Esophagus muscularis mucosa (tissue), 4 donors: ENCODE measurements at regions of chr3 and their contacts with region 1.

Region 1: GRCh38 chr3:57755668-57756527 is at the start of gene SLMAP:
- DNase-seq: peak; percentile 99
- H3K4me3 ChIP-seq: peak within 1 kb of the TSS; percentile 79 to 95 (median 94)
- H3K27ac ChIP-seq: peak within 1 kb of the TSS; percentile 88 to 93 (median 92)
- H3K4me1 ChIP-seq: peaks cover 38 to 46% (median 44%) of the 10 kb centered on the region in 4 donors
- H3K27me3 ChIP-seq: no peaks in the 10 kb centered on the region
- CTCF ChIP-seq: peak in 1 of 3 experiments; percentile 22
- EP300 ChIP-seq: no peak
- POLR2A ChIP-seq: peak; percentile 46
- total RNA-seq, gene SLMAP: 399 to 519 (median 464) TPM

Region 2: DNA sequence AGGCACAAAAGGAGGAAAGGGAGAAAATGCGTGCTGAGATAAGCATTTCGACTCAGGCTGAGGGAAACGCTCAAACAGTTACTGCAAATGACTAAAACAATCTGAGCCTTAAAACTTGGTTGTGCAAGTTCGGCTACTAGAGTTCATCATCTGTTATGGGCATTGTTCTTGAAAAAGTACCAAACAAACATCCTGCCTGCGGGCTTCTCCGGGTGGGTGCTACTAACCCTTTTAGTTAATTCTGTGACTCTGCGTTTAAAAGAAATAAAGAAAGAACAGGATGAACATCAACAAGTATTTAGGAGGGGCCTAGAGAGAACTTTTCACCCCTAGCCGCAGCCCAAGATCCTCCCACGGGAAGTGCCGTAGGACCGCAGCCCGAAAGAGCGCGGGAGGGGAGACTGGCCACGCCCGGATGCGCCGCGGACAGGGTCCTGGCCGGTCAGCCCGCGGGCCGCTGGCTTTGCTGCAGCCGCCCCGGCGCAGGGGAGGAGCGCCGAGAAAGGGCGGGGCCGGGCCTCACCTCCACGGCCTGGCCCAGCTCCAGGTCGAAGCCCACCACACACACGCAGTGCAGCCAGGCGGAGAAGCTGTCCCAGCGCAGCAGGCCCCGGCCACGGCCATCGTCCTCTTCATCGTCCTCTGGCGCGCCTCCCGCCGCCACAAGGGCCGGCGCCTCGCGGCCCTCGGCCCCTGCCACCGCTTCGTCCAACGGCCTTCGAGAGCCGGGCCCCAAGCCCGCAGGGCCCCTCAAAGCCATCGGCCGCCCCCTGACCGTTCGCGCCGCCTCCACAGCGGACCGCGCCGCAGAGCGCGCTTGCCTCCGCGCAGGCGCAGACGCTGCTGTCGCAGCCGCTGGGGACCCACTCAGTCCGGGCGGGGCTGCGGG is 63.4 kb before region 1 on chr3 and contains the start of gene DENND6A:
- intact Hi-C with region 1: loop called (anchors 5 kb)
- DNase-seq: peak; percentile 96
- H3K4me3 ChIP-seq: peak within 1 kb of the TSS; percentile 82 to 93 (median 88)
- H3K27ac ChIP-seq: peak within 1 kb of the TSS; percentile 97 to 99 (median 98)
- H3K4me1 ChIP-seq: peaks cover 29 to 47% (median 42%) of the 10 kb centered on the region in 4 donors
- H3K27me3 ChIP-seq: no peaks in the 10 kb centered on the region
- CTCF ChIP-seq: peak in 1 of 3 experiments; percentile 12
- EP300 ChIP-seq: no peak
- POLR2A ChIP-seq: peak; percentile 97
- total RNA-seq, gene DENND6A: 24.6 to 47.2 (median 43.2) TPM

Region 3: GRCh38 chr3:57791245-57791644 is 35.3 kb after region 1 on chr3:
- intact Hi-C with region 1: no loop called
- DNase-seq: no peak
- H3K4me3 ChIP-seq: no peak overlapping the region
- H3K27ac ChIP-seq: no peak overlapping the region
- H3K4me1 ChIP-seq: peaks cover 21 to 34% (median 28%) of the 10 kb centered on the region in 4 donors
- H3K27me3 ChIP-seq: no peaks in the 10 kb centered on the region
- CTCF ChIP-seq: no peak
- EP300 ChIP-seq: no peak
- POLR2A ChIP-seq: no peak

Region 4: DNA sequence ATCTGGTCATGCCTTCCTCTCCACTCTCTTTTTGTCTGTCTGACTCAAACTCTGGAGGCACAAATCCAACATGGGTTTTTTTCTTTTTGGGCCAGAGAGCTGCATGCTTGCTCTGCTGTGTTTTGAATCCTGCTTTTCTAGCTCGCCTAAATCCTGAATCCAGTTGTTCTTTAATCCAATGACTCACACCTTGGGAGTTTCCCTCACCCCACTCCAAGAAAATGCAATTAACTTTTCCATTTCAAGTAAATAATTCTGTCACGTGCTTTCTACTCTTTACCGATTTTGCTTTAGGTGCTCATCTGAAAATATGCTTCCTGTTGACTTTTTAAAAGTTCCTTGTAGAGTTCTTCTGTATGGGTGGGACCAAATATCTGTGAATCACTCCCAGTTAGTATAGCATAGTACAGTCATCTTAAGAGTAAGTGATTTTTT is 47.8 kb after region 1 on chr3:
- intact Hi-C with region 1: loop called (anchors 5 kb)
- DNase-seq: no peak
- H3K4me3 ChIP-seq: peak overlapping the region in 1 of 4 donors; percentile 15
- H3K27ac ChIP-seq: peak overlapping the region in 3 of 4 donors; percentile 27 to 45 (median 34)
- H3K4me1 ChIP-seq: peaks cover 38 to 49% (median 48%) of the 10 kb centered on the region in 4 donors
- H3K27me3 ChIP-seq: no peaks in the 10 kb centered on the region
- CTCF ChIP-seq: no peak
- EP300 ChIP-seq: no peak
- POLR2A ChIP-seq: no peak

Region 5: GRCh38 chr3:57877116-57877515 is 121.2 kb after region 1 on chr3:
- intact Hi-C with region 1: no loop called
- DNase-seq: no peak
- H3K4me3 ChIP-seq: no peak overlapping the region
- H3K27ac ChIP-seq: peak overlapping the region in 3 of 4 donors; percentile 3 to 66 (median 44)
- H3K4me1 ChIP-seq: peaks cover 0 to 23% (median 13%) of the 10 kb centered on the region in 4 donors
- H3K27me3 ChIP-seq: no peaks in the 10 kb centered on the region
- CTCF ChIP-seq: no peak
- EP300 ChIP-seq: no peak
- POLR2A ChIP-seq: no peak

Region 6: DNA sequence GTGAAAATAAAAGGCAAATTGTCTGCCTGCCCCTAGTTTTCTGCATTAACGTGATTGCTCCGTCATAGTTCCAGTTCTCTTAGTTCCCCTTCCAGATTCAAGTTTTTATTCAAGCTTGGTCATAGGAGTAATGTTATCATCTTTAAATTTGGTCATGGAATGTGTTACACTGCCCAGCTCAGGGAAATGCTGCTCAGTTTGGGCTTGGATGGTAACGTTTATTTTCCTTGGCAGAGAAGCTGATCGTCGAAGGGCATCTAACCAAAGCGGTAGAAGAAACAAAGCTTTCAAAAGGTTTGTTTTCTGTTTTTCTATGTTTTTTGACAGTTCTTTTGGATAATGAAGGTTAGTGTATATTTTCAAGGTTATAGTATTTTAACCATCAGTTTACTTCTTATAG is 133.9 kb after region 1 on chr3:
- intact Hi-C with region 1: no loop called
- DNase-seq: no peak
- H3K4me3 ChIP-seq: peak overlapping the region; percentile 51 to 57 (median 54)
- H3K27ac ChIP-seq: peak overlapping the region; percentile 85 to 93 (median 88)
- H3K4me1 ChIP-seq: peaks cover 0 to 17% (median 10%) of the 10 kb centered on the region in 4 donors
- H3K27me3 ChIP-seq: no peaks in the 10 kb centered on the region
- CTCF ChIP-seq: no peak
- EP300 ChIP-seq: peak; percentile 27
- POLR2A ChIP-seq: no peak